GM18951 (cell line): ENCODE measurements at regions of chr3 and their contacts with region 1.

Region 1: GRCh38 chr3:100581650-100582049 is 27.8 kb upstream of the ADGRG7 start:
- POLR2A ChIP-seq: no peak

Region 2: DNA sequence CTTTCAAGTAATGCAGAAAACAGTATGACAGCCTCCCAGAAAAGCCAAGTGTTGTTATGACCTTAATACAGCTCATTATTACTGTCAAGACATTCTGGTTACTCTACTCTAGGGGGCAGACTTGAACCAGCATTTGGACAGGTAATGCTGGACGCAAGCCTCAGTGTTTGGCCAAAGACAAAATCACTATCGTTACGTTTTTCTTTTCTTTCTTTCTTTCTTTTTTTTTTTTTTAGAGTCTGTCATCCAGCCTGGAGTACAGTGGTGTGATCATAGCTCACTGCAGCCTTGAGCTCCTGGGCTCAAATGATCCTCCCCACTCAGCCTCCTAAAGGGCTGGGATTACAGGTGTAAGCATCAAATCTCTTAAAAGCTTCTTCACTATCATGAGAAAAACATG is 118.6 kb before region 1 on chr3:
- in situ Hi-C with region 1: loop called (anchors 10 kb)
- POLR2A ChIP-seq: no peak